Lower leg skin (tissue), 4 donors: ENCODE measurements at regions of chr4 and their contacts with region 1.

Region 1: DNA sequence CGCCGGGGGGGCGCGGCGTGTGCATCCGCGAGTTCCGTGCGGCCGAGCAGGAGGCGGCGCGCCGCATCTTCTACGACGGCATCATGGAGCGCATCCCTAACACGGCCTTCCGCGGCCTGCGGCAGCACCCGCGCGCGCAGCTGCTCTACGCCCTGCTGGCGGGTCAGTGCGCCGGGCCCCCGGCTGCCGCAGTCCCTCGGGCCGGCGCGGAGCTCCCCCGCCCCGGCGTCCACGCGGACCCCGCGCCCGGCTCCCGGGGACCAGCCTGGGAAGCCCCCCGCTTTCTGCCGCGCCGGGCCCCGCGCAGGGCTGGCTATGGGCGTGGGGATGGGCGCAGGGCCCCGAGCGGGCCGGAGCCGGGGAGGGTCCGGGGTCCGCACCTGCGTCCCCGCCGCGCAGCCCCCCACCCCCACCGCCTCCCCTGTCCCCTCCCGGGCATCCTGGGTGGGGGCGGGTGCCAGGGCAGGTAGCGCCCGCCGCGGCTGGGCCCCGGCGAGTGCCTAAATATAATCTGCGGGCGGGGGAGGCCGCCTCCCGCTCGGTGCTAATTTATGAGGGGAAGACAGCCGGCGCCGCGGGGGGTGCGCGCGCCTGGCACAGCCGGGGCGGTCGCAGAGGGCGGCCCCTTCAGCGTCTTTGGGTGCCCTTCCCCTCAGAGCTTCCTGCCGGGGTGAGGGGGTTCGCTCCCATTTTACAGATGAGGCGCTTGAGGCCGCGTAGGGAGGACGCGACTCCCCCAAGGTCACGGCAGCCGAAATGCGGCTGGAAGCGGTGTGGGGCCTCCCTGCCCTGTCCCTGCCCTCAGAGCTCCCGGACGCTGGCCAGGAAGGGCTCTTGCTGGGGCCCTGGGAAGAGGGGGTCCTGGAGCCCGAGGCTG is 837 bp downstream of the NAT8L start:
- DNase-seq: no peak
- H3K4me3 ChIP-seq: peak overlapping the region; percentile 6
- CTCF ChIP-seq: no peak
- POLR2A ChIP-seq: no peak

Region 2: GRCh38 chr4:866761-867390 is 1193.1 kb before region 1 on chr4:
- intact Hi-C with region 1: no loop called
- DNase-seq: no peak
- H3K4me3 ChIP-seq: no peak overlapping the region
- CTCF ChIP-seq: no peak
- POLR2A ChIP-seq: no peak

Region 3: GRCh38 chr4:2515830-2516550 is 456.0 kb after region 1 on chr4:
- intact Hi-C with region 1: no loop called
- DNase-seq: no peak
- H3K4me3 ChIP-seq: no peak overlapping the region
- CTCF ChIP-seq: no peak
- POLR2A ChIP-seq: no peak

Region 4: GRCh38 chr4:3613967-3614730 is 1554.2 kb after region 1 on chr4:
- intact Hi-C with region 1: loop called (anchors 10 kb)
- DNase-seq: no peak
- H3K4me3 ChIP-seq: no peak overlapping the region
- CTCF ChIP-seq: no peak
- POLR2A ChIP-seq: no peak